Activated CD8-positive, alpha-beta T cell treated with anti-CD3 and anti-CD28 coated beads for 36 hours (primary cell): ENCODE measurements at regions of chr1 and their contacts with region 1.

Region 1: GRCh38 chr1:155001675-155002463 is 733 bp upstream of the ZBTB7B start:
- DNase-seq: peak; percentile 100
- ATAC-seq: peak; percentile 71
- H3K4me3 Mint-ChIP-seq: peak overlapping the region; percentile 70
- H3K27ac Mint-ChIP-seq: peak overlapping the region; percentile 92
- H3K4me1 Mint-ChIP-seq: peaks cover 56% of the 10 kb centered on the region
- H3K27me3 Mint-ChIP-seq: no peaks in the 10 kb centered on the region
- CTCF ChIP-seq: no peak

Region 2: GRCh38 chr1:154955718-154956543 is 45.9 kb before region 1 on chr1 and contains the start of gene PBXIP1:
- CTCF ChIA-PET with region 1: interaction called, 20 read pairs
- POLR2A ChIA-PET with region 1: interaction called, 11 read pairs
- intact Hi-C with region 1: loop called (anchors 5 kb)
- DNase-seq: peak; percentile 86
- ATAC-seq: peak; percentile 49
- H3K4me3 Mint-ChIP-seq: peak within 1 kb of the TSS; percentile 91
- H3K27ac Mint-ChIP-seq: peak within 1 kb of the TSS; percentile 97
- H3K4me1 Mint-ChIP-seq: peaks cover 69% of the 10 kb centered on the region
- H3K27me3 Mint-ChIP-seq: no peaks in the 10 kb centered on the region
- CTCF ChIP-seq: peak; percentile 26
- total RNA-seq, gene PBXIP1: 17.7 to 19.4 TPM

Region 3: DNA sequence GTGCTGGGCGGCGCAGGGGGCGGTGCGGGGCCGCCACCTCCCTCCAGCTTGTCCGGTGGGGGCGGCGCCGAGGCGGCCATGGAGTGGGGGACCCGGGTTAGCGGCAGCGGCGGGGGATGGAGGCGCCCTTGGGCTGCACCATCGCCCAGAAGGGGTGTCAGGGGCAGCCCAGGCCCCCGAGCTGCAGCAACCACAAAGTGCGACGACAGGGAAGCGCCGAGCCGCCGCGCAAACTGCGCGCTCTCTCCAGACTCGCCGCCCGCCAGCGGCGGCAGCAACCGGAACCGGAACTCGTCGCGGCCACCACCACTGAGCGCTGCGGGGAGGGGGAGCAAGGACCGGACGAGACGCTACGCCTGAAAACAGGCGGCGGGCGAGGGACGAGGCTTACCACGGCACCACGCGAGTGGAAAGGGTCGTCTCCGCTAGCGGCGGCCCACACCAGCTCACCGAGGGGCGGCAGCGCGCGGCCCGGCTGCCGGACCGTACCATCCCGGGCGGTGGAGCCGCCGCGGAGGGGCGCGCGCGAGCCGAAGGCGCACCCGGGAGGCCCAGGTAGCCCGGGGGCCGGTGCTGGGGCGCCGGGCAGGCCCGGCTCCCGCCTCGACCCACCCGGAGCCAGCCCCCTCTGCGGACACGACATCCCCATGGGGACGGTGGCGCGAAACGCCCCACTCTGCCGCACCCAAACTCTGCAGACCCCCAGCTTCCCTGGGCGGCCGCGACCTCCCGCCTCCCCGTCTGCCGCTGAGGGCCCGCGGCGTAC is 40.2 kb before region 1 on chr1 and contains the start of gene PYGO2:
- CTCF ChIA-PET with region 1: interaction called, 15 read pairs
- POLR2A ChIA-PET with region 1: interaction called, 11 read pairs
- intact Hi-C with region 1: loop called (anchors 5 kb)
- DNase-seq: peak; percentile 87
- ATAC-seq: peak; percentile 86
- H3K4me3 Mint-ChIP-seq: peak within 1 kb of the TSS; percentile 98
- H3K27ac Mint-ChIP-seq: peak within 1 kb of the TSS; percentile 94
- H3K4me1 Mint-ChIP-seq: peaks cover 33% of the 10 kb centered on the region
- H3K27me3 Mint-ChIP-seq: no peaks in the 10 kb centered on the region
- CTCF ChIP-seq: peak; percentile 56
- total RNA-seq, gene PYGO2: 21.2 to 21.8 TPM

Region 4: DNA sequence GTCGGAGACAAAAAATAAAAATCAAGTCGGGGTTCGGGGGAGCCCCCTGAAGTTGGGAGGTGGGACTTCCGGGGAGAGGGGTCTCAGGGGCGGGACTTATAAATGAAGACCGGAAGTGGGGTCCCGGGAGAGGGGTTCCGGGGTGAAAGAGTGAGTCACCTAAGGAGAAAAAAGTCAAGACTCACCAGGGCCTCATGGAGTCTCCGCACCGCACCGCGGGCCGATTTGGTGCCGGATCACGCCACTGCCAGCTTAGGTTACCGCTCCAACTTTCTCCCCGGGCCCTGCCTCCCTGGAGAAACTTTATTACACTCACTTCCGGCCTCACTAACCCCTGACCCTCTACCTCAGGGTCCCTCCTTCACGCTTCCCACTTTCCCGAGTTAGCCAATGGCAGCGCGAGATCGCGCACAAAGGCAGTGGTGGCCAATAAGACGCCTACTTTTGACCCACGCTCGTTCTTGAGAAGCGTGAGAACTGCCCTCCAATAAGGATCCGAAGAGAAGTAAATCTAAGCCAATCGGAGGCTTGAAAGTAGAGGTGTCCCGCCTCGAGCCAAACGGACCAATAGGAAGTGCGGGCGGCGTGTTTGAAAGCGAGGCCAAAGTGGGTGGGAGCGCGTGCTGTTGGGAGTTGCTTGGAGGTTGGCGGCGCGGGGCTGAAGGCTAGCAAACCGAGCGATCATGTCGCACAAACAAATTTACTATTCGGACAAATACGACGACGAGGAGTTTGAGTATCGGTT is 27.6 kb before region 1 on chr1 and contains the start of gene CKS1B:
- CTCF ChIA-PET with region 1: interaction called, 108 read pairs
- POLR2A ChIA-PET with region 1: interaction called, 33 read pairs
- intact Hi-C with region 1: no loop called
- DNase-seq: peak; percentile 99
- ATAC-seq: peak; percentile 87
- H3K4me3 Mint-ChIP-seq: no peak within 1 kb of the TSS
- H3K27ac Mint-ChIP-seq: no peak within 1 kb of the TSS
- H3K4me1 Mint-ChIP-seq: peaks cover 30% of the 10 kb centered on the region
- H3K27me3 Mint-ChIP-seq: no peaks in the 10 kb centered on the region
- CTCF ChIP-seq: no peak
- total RNA-seq, gene CKS1B: 172 to 173 TPM

Region 5: GRCh38 chr1:154982897-154983648 is 18.8 kb before region 1 on chr1 and contains the start of gene FLAD1:
- CTCF ChIA-PET with region 1: interaction called, 108 read pairs
- POLR2A ChIA-PET with region 1: interaction called, 85 read pairs
- intact Hi-C with region 1: no loop called
- DNase-seq: peak; percentile 98
- ATAC-seq: peak; percentile 99
- H3K4me3 Mint-ChIP-seq: no peak within 1 kb of the TSS
- H3K27ac Mint-ChIP-seq: no peak within 1 kb of the TSS
- H3K4me1 Mint-ChIP-seq: peaks cover 12% of the 10 kb centered on the region
- H3K27me3 Mint-ChIP-seq: no peaks in the 10 kb centered on the region
- CTCF ChIP-seq: no peak
- total RNA-seq, gene FLAD1: 31.5 to 32.9 TPM

Region 6: DNA sequence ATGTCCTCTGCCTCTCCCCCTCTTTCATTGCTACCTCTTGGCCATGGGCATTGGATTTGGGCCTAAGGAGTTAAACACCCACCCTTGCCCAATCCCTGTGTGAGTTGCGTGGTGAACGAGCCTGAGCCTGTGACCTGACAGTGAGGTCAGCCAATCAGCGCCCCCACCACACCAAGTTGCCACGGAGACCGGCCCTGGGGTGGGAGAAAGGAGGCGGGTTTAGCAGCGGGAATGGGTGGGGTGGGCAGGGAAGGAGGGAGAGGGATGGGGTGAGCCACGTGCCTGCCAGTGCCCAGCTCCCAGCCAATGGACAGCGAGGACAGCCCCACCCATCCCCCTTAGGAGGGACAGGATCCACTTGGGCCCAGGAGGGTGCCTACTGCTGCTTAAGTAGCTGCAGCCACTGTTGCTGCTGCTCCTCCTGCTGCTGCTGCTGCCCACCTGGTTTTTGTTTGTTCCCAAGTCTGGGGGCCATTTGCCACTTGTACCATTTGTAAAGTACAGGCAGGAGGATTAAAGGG is 10.2 kb after region 1 on chr1:
- CTCF ChIA-PET with region 1: interaction called, 77 read pairs
- POLR2A ChIA-PET with region 1: interaction called, 29 read pairs
- intact Hi-C with region 1: no loop called
- DNase-seq: no peak
- ATAC-seq: no peak
- H3K4me3 Mint-ChIP-seq: no peak overlapping the region
- H3K27ac Mint-ChIP-seq: peak overlapping the region; percentile 57
- H3K4me1 Mint-ChIP-seq: peaks cover 72% of the 10 kb centered on the region
- H3K27me3 Mint-ChIP-seq: no peaks in the 10 kb centered on the region
- CTCF ChIP-seq: no peak

Region 7: GRCh38 chr1:155050560-155051341 is 48.9 kb after region 1 on chr1 and contains the start of gene ADAM15:
- CTCF ChIA-PET with region 1: interaction called, 14 read pairs
- POLR2A ChIA-PET with region 1: interaction called, 8 read pairs
- intact Hi-C with region 1: no loop called
- DNase-seq: peak; percentile 80
- ATAC-seq: peak; percentile 79
- H3K4me3 Mint-ChIP-seq: peak within 1 kb of the TSS; percentile 88
- H3K27ac Mint-ChIP-seq: peak within 1 kb of the TSS; percentile 60
- H3K4me1 Mint-ChIP-seq: peaks cover 20% of the 10 kb centered on the region
- H3K27me3 Mint-ChIP-seq: no peaks in the 10 kb centered on the region
- CTCF ChIP-seq: peak; percentile 99
- total RNA-seq, gene ADAM15: 36.4 to 37.2 TPM